ENCODE measurements at regions of chr9 and their contacts with region 1.

Region 1: GRCh38 chr9:75001719-75002422 is 26.2 kb downstream of the CARNMT1 start:
- DNase-seq: peak in 3 of 9 experiments; percentile 20 to 87 (median 82)
- ATAC-seq: peak; percentile 96
- H3K4me3 ChIP-seq: no peak overlapping the region
- H3K4me3 Mint-ChIP-seq: no peak overlapping the region
- H3K27ac ChIP-seq: no peak overlapping the region
- H3K27ac Mint-ChIP-seq: no peak overlapping the region
- H3K4me1 ChIP-seq: no peaks in the 10 kb centered on the region
- H3K4me1 Mint-ChIP-seq: peaks cover 8% of the 10 kb centered on the region
- H3K27me3 ChIP-seq: no peaks in the 10 kb centered on the region
- H3K27me3 Mint-ChIP-seq: no peaks in the 10 kb centered on the region
- CTCF ChIP-seq: peak; percentile 85

Region 2: GRCh38 chr9:73200694-73201452 is 1801.0 kb before region 1 on chr9:
- CTCF ChIA-PET with region 1: no interaction called
- POLR2A ChIA-PET with region 1: no interaction called
- intact Hi-C with region 1: loop called in 1 of 2 experiments (anchors 10 kb)
- DNase-seq: peak in 2 of 9 experiments; percentile 33 to 49
- ATAC-seq: no peak
- H3K4me3 ChIP-seq: no peak overlapping the region
- H3K4me3 Mint-ChIP-seq: no peak overlapping the region
- H3K27ac ChIP-seq: no peak overlapping the region
- H3K27ac Mint-ChIP-seq: no peak overlapping the region
- H3K4me1 ChIP-seq: no peaks in the 10 kb centered on the region
- H3K4me1 Mint-ChIP-seq: no peaks in the 10 kb centered on the region
- H3K27me3 ChIP-seq: peaks cover 0 to 2% of the 10 kb centered on the region in 2 experiments
- H3K27me3 Mint-ChIP-seq: peaks cover 23% of the 10 kb centered on the region
- CTCF ChIP-seq: peak; percentile 49

Region 3: DNA sequence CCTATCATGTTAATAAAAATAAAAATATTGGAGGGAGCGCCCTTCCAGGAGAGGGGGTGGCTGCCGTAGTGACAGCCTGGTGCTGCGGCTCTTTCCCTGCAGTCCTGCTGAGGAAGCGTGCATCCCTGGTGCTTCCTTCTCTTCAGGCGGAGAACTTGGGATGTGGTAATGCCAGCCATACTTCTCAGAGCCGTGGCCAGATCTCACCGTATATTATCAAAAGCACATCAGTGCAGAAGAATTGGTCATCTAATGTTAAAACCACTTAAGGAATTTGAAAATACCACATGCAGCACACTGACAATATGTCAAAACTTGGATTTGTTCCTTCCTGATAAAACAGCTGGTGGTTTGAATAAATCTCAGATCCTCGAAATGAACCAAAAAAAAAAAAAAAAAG is 66.9 kb before region 1 on chr9:
- CTCF ChIA-PET with region 1: no interaction called
- POLR2A ChIA-PET with region 1: no interaction called
- intact Hi-C with region 1: loop called in 1 of 2 experiments (anchors 5 kb)
- DNase-seq: no peak
- ATAC-seq: no peak
- H3K4me3 ChIP-seq: no peak overlapping the region
- H3K4me3 Mint-ChIP-seq: no peak overlapping the region
- H3K27ac ChIP-seq: no peak overlapping the region
- H3K27ac Mint-ChIP-seq: no peak overlapping the region
- H3K4me1 ChIP-seq: no peaks in the 10 kb centered on the region
- H3K4me1 Mint-ChIP-seq: no peaks in the 10 kb centered on the region
- H3K27me3 ChIP-seq: no peaks in the 10 kb centered on the region
- H3K27me3 Mint-ChIP-seq: peaks cover 11% of the 10 kb centered on the region
- CTCF ChIP-seq: no peak

Region 4: DNA sequence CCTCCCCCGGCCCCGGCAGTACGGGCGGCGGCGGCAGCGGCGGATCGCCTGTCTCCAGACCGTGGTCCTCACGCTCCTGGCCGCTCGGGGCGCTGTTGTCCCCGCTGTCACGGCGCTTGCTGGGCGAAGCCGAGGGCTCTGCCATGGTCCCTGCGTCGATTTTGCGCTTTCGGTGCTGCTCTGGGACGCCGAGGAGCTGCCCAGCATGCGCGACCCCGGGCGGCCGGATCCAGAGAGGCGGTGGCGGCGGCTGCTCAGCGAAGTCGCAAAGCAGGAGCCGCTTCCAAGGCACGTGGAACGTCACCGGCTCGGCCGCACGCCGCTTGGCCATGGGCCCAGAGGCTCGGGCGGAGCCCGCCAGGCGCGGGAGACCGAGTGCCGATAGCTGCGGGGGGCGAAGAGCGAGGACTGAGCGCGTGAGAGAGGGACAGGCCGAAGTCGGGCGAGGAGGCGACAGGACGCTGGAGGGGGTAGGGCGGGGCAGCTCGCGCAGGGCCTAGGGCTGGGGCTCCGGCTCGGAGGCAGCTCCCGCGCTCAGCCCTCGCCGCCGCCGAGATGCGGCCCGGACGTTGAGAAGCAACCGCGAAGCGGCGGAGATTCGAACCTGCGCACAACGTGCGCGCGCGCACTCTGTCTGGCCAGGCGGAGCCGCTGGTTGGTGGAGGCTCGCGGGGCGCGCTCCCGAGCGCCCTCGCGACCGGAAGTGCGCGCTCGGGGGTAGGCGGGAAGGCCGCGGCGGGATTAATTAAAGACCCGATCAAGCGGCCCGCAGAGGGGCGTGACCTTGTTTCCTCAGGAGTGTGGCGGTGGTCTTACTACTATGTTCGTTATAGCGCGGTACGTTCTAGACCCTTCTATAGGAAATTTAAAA is 49.4 kb before region 1 on chr9 and contains the start of gene C9orf40:
- CTCF ChIA-PET with region 1: interaction called, 12 read pairs
- POLR2A ChIA-PET with region 1: interaction called, 3 read pairs
- intact Hi-C with region 1: loop called (anchors 2 kb)
- DNase-seq: peak; percentile 81 to 93 (median 92)
- ATAC-seq: peak; percentile 88
- H3K4me3 ChIP-seq: peak within 1 kb of the TSS; percentile 86 to 99
- H3K4me3 Mint-ChIP-seq: peak within 1 kb of the TSS; percentile 98
- H3K27ac ChIP-seq: peak within 1 kb of the TSS; percentile 87 to 95
- H3K27ac Mint-ChIP-seq: peak within 1 kb of the TSS; percentile 94
- H3K4me1 ChIP-seq: no peaks in the 10 kb centered on the region
- H3K4me1 Mint-ChIP-seq: peaks cover 20% of the 10 kb centered on the region
- H3K27me3 ChIP-seq: no peaks in the 10 kb centered on the region
- H3K27me3 Mint-ChIP-seq: no peaks in the 10 kb centered on the region
- CTCF ChIP-seq: peak; percentile 77
- total RNA-seq, gene C9orf40: 1.5 to 2.3 TPM

Region 5: GRCh38 chr9:74973714-74974113 is 28.2 kb before region 1 on chr9:
- CTCF ChIA-PET with region 1: no interaction called
- POLR2A ChIA-PET with region 1: no interaction called
- intact Hi-C with region 1: no loop called
- DNase-seq: no peak
- ATAC-seq: no peak
- H3K4me3 ChIP-seq: no peak overlapping the region
- H3K4me3 Mint-ChIP-seq: no peak overlapping the region
- H3K27ac ChIP-seq: no peak overlapping the region
- H3K27ac Mint-ChIP-seq: peak overlapping the region; percentile 38
- H3K4me1 ChIP-seq: no peaks in the 10 kb centered on the region
- H3K4me1 Mint-ChIP-seq: peaks cover 14% of the 10 kb centered on the region
- H3K27me3 ChIP-seq: no peaks in the 10 kb centered on the region
- H3K27me3 Mint-ChIP-seq: no peaks in the 10 kb centered on the region
- CTCF ChIP-seq: no peak

Region 6: DNA sequence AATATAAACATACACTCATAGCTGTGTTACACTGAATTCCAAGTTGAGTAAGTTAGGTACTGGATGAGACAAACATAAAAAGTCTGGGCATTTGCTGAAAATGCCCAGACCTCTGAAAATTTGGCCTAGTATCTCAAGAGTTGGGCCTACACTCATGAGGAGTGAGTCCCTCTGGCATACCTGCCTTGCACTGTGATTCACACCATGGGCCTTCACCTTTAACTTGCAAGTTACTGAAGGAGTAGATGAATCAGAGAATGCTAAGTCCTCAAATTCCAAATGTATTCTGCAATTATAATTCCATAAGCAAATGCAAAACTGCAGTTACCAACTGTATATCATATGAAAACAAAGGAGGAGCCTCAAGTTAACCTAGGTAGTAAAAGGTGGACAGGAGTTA is 16.8 kb before region 1 on chr9:
- CTCF ChIA-PET with region 1: no interaction called
- POLR2A ChIA-PET with region 1: no interaction called
- intact Hi-C with region 1: loop called in 1 of 2 experiments (anchors 2 kb)
- DNase-seq: no peak
- ATAC-seq: no peak
- H3K4me3 ChIP-seq: no peak overlapping the region
- H3K4me3 Mint-ChIP-seq: no peak overlapping the region
- H3K27ac ChIP-seq: no peak overlapping the region
- H3K27ac Mint-ChIP-seq: no peak overlapping the region
- H3K4me1 ChIP-seq: no peaks in the 10 kb centered on the region
- H3K4me1 Mint-ChIP-seq: peaks cover 3% of the 10 kb centered on the region
- H3K27me3 ChIP-seq: no peaks in the 10 kb centered on the region
- H3K27me3 Mint-ChIP-seq: no peaks in the 10 kb centered on the region
- CTCF ChIP-seq: no peak

Region 7: GRCh38 chr9:75071530-75072124 is 69.8 kb after region 1 on chr9:
- CTCF ChIA-PET with region 1: interaction called, 4 read pairs
- POLR2A ChIA-PET with region 1: no interaction called
- intact Hi-C with region 1: loop called in 1 of 2 experiments (anchors 2 kb)
- DNase-seq: peak in 6 of 9 experiments; percentile 44 to 75 (median 58)
- ATAC-seq: peak; percentile 97
- H3K4me3 ChIP-seq: no peak overlapping the region
- H3K4me3 Mint-ChIP-seq: no peak overlapping the region
- H3K27ac ChIP-seq: no peak overlapping the region
- H3K27ac Mint-ChIP-seq: peak overlapping the region; percentile 85
- H3K4me1 ChIP-seq: peaks cover 7% of the 10 kb centered on the region
- H3K4me1 Mint-ChIP-seq: peaks cover 17% of the 10 kb centered on the region
- H3K27me3 ChIP-seq: no peaks in the 10 kb centered on the region
- H3K27me3 Mint-ChIP-seq: no peaks in the 10 kb centered on the region
- CTCF ChIP-seq: no peak

Region 8: DNA sequence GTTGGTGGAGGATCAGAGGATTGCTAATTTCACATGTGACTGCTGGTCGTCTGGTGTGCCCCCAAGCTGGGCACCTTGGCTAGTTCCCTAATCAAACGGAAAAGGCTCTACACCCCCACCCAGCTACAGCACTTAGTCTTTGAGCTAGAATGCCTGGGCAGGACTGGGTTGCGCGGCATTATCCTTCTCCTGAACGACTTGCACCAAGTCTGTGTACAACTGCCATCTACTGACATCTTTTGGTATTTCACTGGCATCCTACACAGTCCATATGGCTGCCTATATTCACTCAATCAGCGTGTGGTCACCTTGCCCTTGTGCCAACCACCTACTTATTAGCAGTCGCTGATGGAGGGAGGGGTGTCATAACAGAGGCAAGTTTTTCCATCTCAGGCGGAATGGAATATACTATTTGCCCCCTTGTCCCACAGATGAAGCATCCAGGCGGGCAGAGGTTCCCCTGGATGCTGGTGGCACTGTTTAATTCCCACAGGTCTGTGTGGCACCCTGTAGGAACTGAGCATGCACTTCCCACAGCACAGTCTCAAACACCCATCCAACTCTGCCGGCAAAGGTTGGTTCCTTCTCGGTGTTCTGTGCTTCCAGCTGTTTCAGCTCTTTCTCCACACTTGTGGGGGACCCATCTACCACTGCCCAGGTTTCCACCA is 236.6 kb after region 1 on chr9:
- CTCF ChIA-PET with region 1: no interaction called
- POLR2A ChIA-PET with region 1: no interaction called
- intact Hi-C with region 1: loop called in 1 of 2 experiments (anchors 2 kb)
- DNase-seq: peak in 7 of 9 experiments; percentile 1 to 70 (median 27)
- ATAC-seq: peak; percentile 93
- H3K4me3 ChIP-seq: no peak overlapping the region
- H3K4me3 Mint-ChIP-seq: no peak overlapping the region
- H3K27ac ChIP-seq: no peak overlapping the region
- H3K27ac Mint-ChIP-seq: no peak overlapping the region
- H3K4me1 ChIP-seq: no peaks in the 10 kb centered on the region
- H3K4me1 Mint-ChIP-seq: no peaks in the 10 kb centered on the region
- H3K27me3 ChIP-seq: no peaks in the 10 kb centered on the region
- H3K27me3 Mint-ChIP-seq: no peaks in the 10 kb centered on the region
- CTCF ChIP-seq: peak; percentile 62